ENCODE measurements at regions of chrX and their contacts with region 1.

Region 1: GRCh38 chrX:31213941-31214340 is 142.1 kb upstream of the FTHL17 start:
- DNase-seq: peak; percentile 19
- ATAC-seq: no peak
- H3K4me3 ChIP-seq: no peak overlapping the region
- H3K27ac ChIP-seq: no peak overlapping the region
- H3K4me1 ChIP-seq: peaks cover 4% of the 10 kb centered on the region; the same call in 1 of the 2 replicates
- H3K27me3 ChIP-seq: no peaks in the 10 kb centered on the region
- CTCF ChIP-seq: peak; percentile 57
- POLR2A ChIP-seq: no peak
- RAD21 ChIP-seq: peak; percentile 61

Region 2: GRCh38 chrX:31245714-31246113 is 31.8 kb after region 1 on chrX:
- CTCF ChIA-PET with region 1: no interaction called
- POLR2A ChIA-PET with region 1: no interaction called
- dilution Hi-C with region 1: no loop called
- in situ Hi-C with region 1: no loop called
- intact Hi-C with region 1: no loop called
- DNase-seq: no peak
- ATAC-seq: no peak
- H3K4me3 ChIP-seq: no peak overlapping the region
- H3K27ac ChIP-seq: no peak overlapping the region
- H3K4me1 ChIP-seq: no peaks in the 10 kb centered on the region
- H3K27me3 ChIP-seq: no peaks in the 10 kb centered on the region
- CTCF ChIP-seq: no peak
- POLR2A ChIP-seq: no peak
- RAD21 ChIP-seq: no peak

Region 3: GRCh38 chrX:31555506-31555905 is 341.6 kb after region 1 on chrX:
- CTCF ChIA-PET with region 1: no interaction called
- POLR2A ChIA-PET with region 1: no interaction called
- dilution Hi-C with region 1: no loop called
- in situ Hi-C with region 1: no loop called
- intact Hi-C with region 1: loop called (anchors 10 kb)
- DNase-seq: peak; percentile 6
- ATAC-seq: no peak
- H3K4me3 ChIP-seq: no peak overlapping the region
- H3K27ac ChIP-seq: no peak overlapping the region
- H3K4me1 ChIP-seq: no peaks in the 10 kb centered on the region
- H3K27me3 ChIP-seq: no peaks in the 10 kb centered on the region
- CTCF ChIP-seq: no peak
- POLR2A ChIP-seq: no peak
- RAD21 ChIP-seq: no peak

Region 4: GRCh38 chrX:31658360-31658759 is 444.4 kb after region 1 on chrX:
- CTCF ChIA-PET with region 1: interaction called, 3 read pairs
- POLR2A ChIA-PET with region 1: no interaction called
- dilution Hi-C with region 1: no loop called
- in situ Hi-C with region 1: loop called (anchors 10 kb)
- intact Hi-C with region 1: loop called (anchors 2 kb)
- DNase-seq: peak; percentile 49
- ATAC-seq: no peak
- H3K4me3 ChIP-seq: no peak overlapping the region
- H3K27ac ChIP-seq: no peak overlapping the region
- H3K4me1 ChIP-seq: no peaks in the 10 kb centered on the region
- H3K27me3 ChIP-seq: no peaks in the 10 kb centered on the region; the same call in 1 of the 2 replicates
- CTCF ChIP-seq: peak; percentile 63
- POLR2A ChIP-seq: no peak
- RAD21 ChIP-seq: peak; percentile 67

Measured in IMR-90 (cell line).